ENCODE measurements at regions of chr16 and their contacts with region 1.

Region 1: DNA sequence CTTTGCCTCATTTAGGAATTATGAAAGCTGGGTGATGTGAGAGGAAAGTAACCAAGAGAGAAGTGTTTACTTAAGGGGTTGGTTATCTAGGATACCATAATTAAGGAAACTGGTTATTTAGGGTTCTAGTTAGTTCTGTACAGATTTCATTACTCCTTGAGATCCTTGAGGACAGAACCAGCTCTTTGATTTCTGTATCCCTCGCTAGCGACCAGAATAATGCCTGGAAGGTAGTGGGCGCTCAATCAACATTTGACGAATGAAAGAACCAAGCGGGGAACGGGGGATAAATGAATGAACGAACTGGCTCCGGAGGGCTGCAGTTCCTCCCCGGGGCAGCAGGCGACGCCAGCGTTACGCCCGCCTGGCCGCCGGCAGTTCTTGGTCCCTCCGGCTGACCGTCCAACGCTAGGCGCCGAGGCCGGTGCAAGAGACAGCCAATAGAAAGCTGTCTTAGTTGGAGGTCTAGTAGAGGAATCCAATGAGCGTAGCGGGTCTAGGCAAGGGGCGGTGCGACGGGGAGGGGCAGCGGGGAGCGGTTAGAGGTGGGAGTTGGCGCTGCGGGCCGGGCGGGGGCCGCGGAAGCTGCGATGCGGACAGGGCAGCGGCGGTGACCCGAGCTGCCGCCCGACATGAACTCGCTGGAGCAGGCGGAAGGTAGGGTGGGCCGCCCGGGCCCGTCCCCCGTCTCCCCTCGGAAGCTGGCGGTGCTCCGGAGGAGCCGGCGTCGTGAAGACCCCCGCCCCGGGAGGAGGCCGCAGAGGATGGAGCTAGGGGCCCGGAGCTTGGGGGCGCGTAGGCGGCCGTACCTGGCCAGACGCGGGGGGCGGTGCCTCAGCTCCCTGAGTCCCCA is at the start of gene CNEP1R1:
- DNase-seq: peak; percentile 100
- H3K27ac ChIP-seq: peak within 1 kb of the TSS; percentile 75
- CTCF ChIP-seq: peak; percentile 100

Region 2: DNA sequence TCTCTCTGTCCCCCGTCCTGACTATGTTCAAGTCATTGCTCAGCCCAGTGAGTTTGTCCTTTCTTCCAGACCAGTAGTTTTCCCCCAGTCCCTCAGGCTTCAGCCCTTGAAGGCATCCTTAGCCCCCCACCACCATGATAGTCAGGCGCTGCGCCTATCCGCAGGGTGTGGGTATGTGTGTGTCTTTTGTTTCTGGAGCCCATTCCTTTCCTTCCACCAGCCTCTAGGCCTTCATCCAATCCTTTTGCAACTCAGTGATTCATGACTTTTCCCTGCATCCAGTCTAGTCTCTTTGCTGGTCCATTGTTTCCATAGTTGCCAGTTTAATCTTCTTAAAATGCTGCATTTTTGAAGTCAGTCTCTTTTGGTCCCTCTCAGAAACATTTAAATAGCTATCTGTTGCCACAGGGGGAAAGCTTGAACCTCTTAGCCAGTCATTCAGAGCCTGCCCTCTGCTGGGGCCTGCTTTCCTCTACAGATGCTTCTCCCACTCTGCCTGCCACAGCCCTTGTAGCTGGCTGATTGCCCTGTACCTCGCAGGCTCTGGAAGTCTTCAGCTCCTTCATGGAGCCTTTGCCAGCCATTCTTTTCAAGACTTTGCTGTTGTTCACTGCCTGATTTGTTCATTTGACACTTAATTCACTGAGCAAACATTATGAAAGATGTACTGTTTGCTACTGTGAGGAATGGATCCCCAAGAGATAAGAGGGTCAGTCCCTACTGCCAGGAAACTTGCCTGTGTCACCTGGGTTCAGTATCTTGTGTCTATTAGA is 185.5 kb after region 1 on chr16:
- CTCF ChIA-PET with region 1: interaction called, 23 read pairs
- POLR2A ChIA-PET with region 1: no interaction called
- DNase-seq: no peak
- H3K27ac ChIP-seq: peak overlapping the region; percentile 67
- CTCF ChIP-seq: peak; percentile 64